ENCODE measurements at regions of chr3 and their contacts with region 1.

Region 1: DNA sequence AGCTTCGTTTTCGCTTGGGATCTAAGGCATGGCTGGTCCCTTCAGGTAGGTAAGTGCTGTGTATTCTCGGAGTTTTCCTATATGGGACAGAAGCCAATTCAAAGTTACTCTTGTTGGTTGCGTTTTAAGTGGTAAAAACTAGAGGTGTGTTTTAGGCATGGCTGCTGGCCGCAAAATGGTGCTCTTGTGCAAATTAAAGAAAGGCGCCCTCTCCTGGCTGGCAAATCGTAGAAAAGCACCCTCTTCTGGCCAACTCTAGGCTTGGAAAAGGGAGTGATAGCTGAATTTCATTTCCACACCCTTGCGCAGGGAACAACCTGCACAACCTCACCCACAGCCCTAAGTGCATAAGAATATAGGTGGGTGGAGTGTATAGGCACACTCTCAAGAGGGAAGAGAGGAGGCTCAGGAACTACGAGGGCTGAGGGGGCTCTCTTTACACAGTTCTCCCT is 23.5 kb downstream of the DRD3 start:
- DNase-seq: peak in 1 of 2 experiments; percentile 74
- H3K4me3 ChIP-seq: peak overlapping the region in 1 of 4 experiments; percentile 32; a peak in 1 of 8 replicates
- H3K27ac ChIP-seq: peak overlapping the region; percentile 39; the same call in 1 of the 2 replicates
- H3K4me1 ChIP-seq: peaks cover 14 to 27% (median 20%) of the 10 kb centered on the region in 4 experiments
- H3K27me3 ChIP-seq: no peaks in the 10 kb centered on the region; a peak in 1 of 7 replicates
- CTCF ChIP-seq: peak; percentile 56 to 99 (median 84)
- EP300 ChIP-seq: no peak; a peak in 1 of 3 replicates
- POLR2A ChIP-seq: no peak
- RAD21 ChIP-seq: peak; percentile 25 to 50

Region 2: GRCh38 chr3:114168150-114168549 is 12.8 kb after region 1 on chr3:
- CTCF ChIA-PET with region 1: interaction called, 27 read pairs
- POLR2A ChIA-PET with region 1: no interaction called
- DNase-seq: no peak
- H3K4me3 ChIP-seq: no peak overlapping the region
- H3K27ac ChIP-seq: no peak overlapping the region
- H3K4me1 ChIP-seq: no peaks in the 10 kb centered on the region
- H3K27me3 ChIP-seq: no peaks in the 10 kb centered on the region; a peak in 1 of 7 replicates
- CTCF ChIP-seq: no peak
- EP300 ChIP-seq: no peak
- POLR2A ChIP-seq: no peak
- RAD21 ChIP-seq: no peak

Region 3: GRCh38 chr3:114179575-114179974 is 24.2 kb after region 1 on chr3:
- CTCF ChIA-PET with region 1: interaction called, 12 read pairs
- POLR2A ChIA-PET with region 1: interaction called, 9 read pairs
- DNase-seq: no peak
- H3K4me3 ChIP-seq: no peak overlapping the region
- H3K27ac ChIP-seq: no peak overlapping the region
- H3K4me1 ChIP-seq: peaks cover 0 to 7% (median 1%) of the 10 kb centered on the region in 4 experiments; a peak in 2 of 7 replicates
- H3K27me3 ChIP-seq: no peaks in the 10 kb centered on the region
- CTCF ChIP-seq: peak in 2 of 3 experiments; percentile 66 to 79; a peak in 3 of 4 replicates
- EP300 ChIP-seq: no peak
- POLR2A ChIP-seq: no peak
- RAD21 ChIP-seq: peak; percentile 50 to 65